ENCODE measurements at regions of chr4 and their contacts with region 1.

Region 1: GRCh38 chr4:82284858-82285805 is 88.7 kb downstream of the HNRNPD start:
- DNase-seq: peak; percentile 99
- H3K4me3 ChIP-seq: peak overlapping the region; percentile 49 to 61 (median 52)
- H3K27ac ChIP-seq: peak overlapping the region; percentile 63 to 81 (median 66)
- H3K4me1 ChIP-seq: peaks cover 4 to 12% (median 10%) of the 10 kb centered on the region in 4 donors
- H3K27me3 ChIP-seq: no peaks in the 10 kb centered on the region
- CTCF ChIP-seq: peak in 2 of 3 experiments; percentile 87 to 98
- EP300 ChIP-seq: no peak
- POLR2A ChIP-seq: no peak

Region 2: DNA sequence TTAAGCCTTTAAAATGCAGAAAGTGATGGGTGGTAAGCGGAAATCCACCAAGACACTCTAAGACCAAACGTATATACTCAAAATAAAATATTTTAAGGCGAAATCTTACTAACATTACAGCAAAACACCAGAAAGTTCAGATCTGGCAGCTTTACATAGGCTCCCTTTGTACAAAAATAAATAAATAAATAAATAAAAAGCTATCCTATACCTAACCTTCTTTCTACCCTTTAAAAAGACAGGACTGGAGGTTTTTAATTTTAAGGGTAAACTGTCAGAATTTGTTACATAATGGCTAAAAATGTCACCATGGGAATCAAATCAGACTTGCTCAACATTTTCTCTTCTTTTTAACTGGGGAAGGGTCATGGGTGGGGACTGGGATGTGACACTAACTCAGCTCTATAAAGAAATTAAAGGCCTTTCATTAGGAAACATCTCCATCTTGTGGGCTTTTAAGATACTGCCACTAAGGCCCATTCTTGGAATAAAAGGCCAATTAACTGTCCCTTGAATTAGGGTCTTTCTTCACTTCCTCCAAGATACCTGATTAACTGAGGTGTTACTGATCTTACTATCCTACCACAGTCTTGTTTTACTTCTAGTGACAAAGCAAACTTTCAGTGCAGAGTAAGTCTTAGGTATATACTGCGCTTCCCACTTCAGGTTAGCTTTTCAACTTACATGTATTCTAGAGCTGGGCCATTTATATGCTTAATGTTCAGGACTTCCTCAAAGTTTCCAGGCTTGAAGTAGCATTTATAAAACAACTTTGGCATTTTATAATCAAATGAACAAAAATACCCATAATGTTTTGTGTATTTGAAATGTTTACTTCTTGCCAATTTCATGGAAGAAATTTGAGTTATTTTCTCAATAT is 75.4 kb after region 1 on chr4:
- intact Hi-C with region 1: loop called (anchors 5 kb)
- DNase-seq: no peak
- H3K4me3 ChIP-seq: no peak overlapping the region
- H3K27ac ChIP-seq: peak overlapping the region in 3 of 4 donors; percentile 31 to 73 (median 55)
- H3K4me1 ChIP-seq: peaks cover 63 to 91% (median 83%) of the 10 kb centered on the region in 4 donors
- H3K27me3 ChIP-seq: no peaks in the 10 kb centered on the region
- CTCF ChIP-seq: peak; percentile 68 to 76 (median 71)
- EP300 ChIP-seq: no peak
- POLR2A ChIP-seq: no peak

Region 3: DNA sequence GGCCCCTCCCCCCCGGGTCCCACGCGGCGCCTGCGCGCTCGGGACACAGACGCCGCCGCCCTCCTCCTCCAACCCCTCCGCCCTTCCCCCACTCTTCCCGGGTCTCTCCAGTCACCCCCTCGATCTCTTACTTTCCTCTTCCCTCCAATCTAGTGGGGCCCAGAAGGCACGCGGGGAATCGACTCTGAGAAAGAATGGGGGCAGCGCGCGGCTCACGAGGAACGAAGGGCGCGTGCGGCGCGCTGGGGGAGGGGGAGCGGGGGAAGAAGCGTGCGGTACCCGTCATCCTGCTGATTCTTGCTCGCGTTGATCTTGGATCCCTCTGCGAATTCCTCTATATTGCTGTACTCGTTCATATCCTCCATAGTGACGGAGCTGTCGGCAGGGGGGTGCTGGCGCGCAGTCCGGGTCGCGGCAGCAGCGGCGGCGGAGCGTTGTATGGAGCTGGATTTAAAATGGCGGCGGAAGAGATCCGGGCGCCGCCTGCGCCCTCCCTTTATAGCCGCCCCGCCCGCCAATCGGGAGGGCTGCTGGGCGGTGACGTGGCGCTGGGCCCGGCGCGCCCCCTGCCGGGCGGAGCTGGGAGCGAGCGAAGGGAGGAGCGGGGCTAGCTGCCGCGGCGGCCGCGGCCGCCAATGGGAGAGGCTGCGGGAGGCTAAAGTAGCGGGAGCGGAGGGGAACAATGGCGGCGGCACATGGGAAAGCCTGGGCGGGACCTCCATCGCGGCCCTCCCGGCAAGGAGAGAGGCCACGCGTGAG is 144.0 kb after region 1 on chr4:
- intact Hi-C with region 1: loop called (anchors 5 kb)
- DNase-seq: peak; percentile 96
- H3K4me3 ChIP-seq: peak overlapping the region; percentile 77 to 98 (median 94)
- H3K27ac ChIP-seq: peak overlapping the region; percentile 98 to 100 (median 98)
- H3K4me1 ChIP-seq: peaks cover 30 to 61% (median 53%) of the 10 kb centered on the region in 4 donors
- H3K27me3 ChIP-seq: no peaks in the 10 kb centered on the region
- CTCF ChIP-seq: peak; percentile 91 to 98 (median 94)
- EP300 ChIP-seq: no peak
- POLR2A ChIP-seq: peak; percentile 79

Region 4: DNA sequence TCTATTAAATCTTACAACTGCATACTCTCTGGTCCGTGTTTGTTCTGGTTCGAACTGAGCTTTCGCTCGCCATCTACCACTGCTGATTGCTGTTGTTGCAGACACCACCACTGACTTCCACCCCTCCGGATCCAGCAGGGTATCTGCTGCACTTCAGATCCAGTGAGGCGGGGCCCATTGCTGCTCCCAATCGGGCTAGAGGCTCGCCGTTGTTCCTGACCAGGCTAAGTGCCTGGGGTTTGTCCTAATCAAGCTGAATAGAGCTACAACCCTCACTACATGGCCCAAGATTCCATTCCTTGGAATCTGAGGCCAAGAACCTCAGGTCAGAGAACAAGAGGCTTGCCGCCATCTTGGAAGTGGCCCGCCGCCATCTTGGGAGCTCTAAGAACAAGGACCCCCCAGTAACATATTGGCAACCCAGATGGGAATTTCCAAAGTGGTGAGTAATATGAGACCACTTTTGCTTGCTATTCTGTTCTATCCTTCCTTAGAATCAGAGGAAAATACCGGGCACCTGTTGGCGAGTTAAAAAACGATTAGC is 188.6 kb after region 1 on chr4:
- intact Hi-C with region 1: no loop called
- DNase-seq: peak; percentile 57
- H3K4me3 ChIP-seq: no peak overlapping the region
- H3K27ac ChIP-seq: no peak overlapping the region
- H3K4me1 ChIP-seq: no peaks in the 10 kb centered on the region
- H3K27me3 ChIP-seq: no peaks in the 10 kb centered on the region
- CTCF ChIP-seq: no peak
- EP300 ChIP-seq: no peak
- POLR2A ChIP-seq: no peak

Measured in esophagus muscularis mucosa (tissue), 4 donors.